CD4-positive, alpha-beta memory T cell (primary cell): ENCODE measurements at regions of chr7 and their contacts with region 1.

Region 1: DNA sequence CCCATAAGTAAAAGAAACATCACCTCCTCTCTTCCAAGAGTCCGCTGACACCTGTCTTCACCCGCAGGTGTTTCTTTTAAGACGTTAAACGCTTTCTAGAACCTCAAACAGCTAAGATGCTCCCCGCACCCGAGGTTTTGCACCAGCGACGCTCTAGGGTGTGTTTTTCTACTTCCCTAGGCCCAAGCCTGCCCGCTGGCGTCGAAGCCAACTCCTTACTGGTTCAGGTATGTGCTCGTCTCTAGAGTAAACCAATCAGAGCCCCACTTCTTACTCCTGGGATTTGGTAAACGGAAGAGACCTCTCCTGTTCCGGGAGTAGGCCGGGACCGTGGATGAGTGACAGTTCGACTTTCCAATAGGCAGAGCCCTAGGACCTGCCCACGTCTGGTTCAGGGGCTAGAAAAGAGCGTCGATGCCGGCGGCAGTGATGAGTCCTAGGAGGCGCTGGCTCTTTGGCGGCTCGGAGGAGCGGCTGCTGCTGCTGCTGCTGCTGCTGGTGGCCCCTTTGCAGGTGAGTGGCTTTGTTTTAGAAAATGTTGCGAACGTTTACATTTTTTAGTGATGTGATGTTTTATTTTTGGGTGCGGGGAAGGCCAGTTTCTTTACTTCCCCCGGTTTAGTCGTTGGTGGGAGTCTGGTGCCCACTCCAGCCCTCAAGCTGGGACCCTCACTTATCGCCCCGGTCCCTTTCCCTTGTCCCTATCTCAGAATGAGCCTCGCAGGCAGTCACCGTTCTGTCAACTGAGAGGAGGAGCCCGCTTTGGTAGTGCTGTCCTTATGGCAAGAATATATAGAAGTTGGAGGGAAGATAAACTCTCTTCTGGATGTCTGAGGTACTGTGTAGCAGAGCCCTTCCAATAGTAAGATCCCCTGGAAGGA is at the start of gene BPGM:
- DNase-seq: peak; percentile 98 to 100 (median 99)
- H3K4me3 ChIP-seq: peak within 1 kb of the TSS; percentile 66 to 68
- H3K4me3 Mint-ChIP-seq: no peak within 1 kb of the TSS
- H3K27ac ChIP-seq: peak within 1 kb of the TSS; percentile 84
- H3K27ac Mint-ChIP-seq: no peak within 1 kb of the TSS
- H3K4me1 ChIP-seq: peaks cover 32% of the 10 kb centered on the region
- H3K4me1 Mint-ChIP-seq: peaks cover 17 to 22% (median 20%) of the 10 kb centered on the region in 4 donors
- H3K27me3 ChIP-seq: no peaks in the 10 kb centered on the region
- H3K27me3 Mint-ChIP-seq: no peaks in the 10 kb centered on the region
- total RNA-seq, gene BPGM: 13.7 to 14.7 TPM

Region 2: DNA sequence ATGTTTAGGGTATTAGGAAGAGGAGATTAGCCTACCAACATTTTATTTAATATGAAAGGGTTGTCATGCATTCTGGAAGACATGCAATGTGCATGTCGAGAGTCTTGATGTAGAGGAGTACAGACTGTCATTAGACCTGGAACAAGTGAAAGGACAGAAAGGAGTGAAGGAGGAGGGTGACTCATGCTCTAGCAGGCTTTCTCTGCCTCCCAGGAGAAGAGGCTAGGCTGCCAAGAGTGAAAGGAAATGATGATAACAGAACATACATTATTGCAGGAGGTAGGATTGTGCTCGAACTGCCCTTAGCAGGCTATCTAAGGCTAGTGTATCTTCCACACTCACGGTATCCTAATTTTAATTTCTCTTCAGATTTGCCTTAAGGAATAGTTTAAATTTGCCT is 1165.0 kb before region 1 on chr7:
- CTCF ChIA-PET with region 1: no interaction called
- POLR2A ChIA-PET with region 1: no interaction called
- intact Hi-C with region 1: no loop called
- DNase-seq: no peak
- H3K4me3 ChIP-seq: no peak overlapping the region
- H3K4me3 Mint-ChIP-seq: no peak overlapping the region
- H3K27ac ChIP-seq: no peak overlapping the region
- H3K27ac Mint-ChIP-seq: no peak overlapping the region
- H3K4me1 ChIP-seq: peaks cover 15% of the 10 kb centered on the region
- H3K4me1 Mint-ChIP-seq: peaks cover 24 to 29% (median 26%) of the 10 kb centered on the region in 4 donors
- H3K27me3 ChIP-seq: no peaks in the 10 kb centered on the region
- H3K27me3 Mint-ChIP-seq: no peaks in the 10 kb centered on the region

Region 3: DNA sequence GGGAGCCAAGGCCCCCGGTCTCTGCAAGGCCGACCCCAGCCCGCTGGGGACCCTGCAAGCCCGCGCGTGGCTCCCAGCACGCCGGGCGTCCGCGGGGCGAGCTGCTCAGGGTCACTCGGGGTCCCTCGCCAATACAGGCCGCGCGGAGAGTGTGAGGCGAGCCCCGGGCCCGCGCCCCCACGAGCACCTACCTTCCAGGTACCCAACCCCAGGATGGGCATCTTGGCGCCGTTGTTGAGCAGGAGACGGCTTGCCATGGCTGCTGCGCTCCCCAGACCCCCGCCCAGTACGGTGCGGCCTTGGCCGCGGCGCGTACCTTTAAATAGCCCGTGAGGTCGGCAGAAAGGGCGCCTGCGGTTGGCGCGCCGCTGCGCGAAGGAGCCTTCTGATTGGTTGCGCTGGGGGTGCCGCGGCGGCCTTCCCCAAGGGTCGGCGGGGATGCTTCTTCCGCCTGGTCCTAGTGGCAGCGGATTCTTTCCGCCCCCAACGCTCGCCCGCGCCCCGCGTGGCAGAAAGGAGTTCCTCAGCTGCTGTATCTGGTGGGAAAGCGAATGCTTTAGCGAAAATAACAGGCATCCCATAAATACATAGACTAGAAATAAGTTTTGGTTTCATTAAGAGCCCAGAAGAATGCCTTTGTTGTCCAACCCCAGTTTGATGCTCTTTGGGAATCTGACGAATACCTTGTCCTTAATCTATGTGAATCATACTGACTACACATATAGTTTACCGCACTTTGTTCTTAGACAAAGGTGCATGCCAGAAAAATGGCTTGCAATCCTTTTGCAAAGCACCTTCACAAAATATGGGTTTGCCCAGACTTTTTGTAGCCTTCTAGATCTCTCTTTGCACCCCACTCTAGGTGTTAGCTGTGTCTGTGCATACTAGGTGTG is 187.6 kb before region 1 on chr7 and contains the start of gene AKR1B1:
- CTCF ChIA-PET with region 1: no interaction called
- POLR2A ChIA-PET with region 1: no interaction called
- intact Hi-C with region 1: loop called (anchors 2 kb)
- DNase-seq: peak; percentile 84 to 89 (median 86)
- H3K4me3 ChIP-seq: peak within 1 kb of the TSS; percentile 25 to 62
- H3K4me3 Mint-ChIP-seq: peak within 1 kb of the TSS; percentile 91 to 94 (median 92)
- H3K27ac ChIP-seq: peak within 1 kb of the TSS; percentile 55
- H3K27ac Mint-ChIP-seq: peak within 1 kb of the TSS; percentile 71 to 95 (median 88)
- H3K4me1 ChIP-seq: peaks cover 36% of the 10 kb centered on the region
- H3K4me1 Mint-ChIP-seq: peaks cover 38 to 57% (median 43%) of the 10 kb centered on the region in 4 donors
- H3K27me3 ChIP-seq: no peaks in the 10 kb centered on the region
- H3K27me3 Mint-ChIP-seq: no peaks in the 10 kb centered on the region
- total RNA-seq, gene AKR1B1: 81.2 to 91.1 TPM

Region 4: GRCh38 chr7:134669845-134670373 is 23.2 kb after region 1 on chr7:
- CTCF ChIA-PET with region 1: interaction called, 25 read pairs
- POLR2A ChIA-PET with region 1: interaction called, 119 read pairs
- intact Hi-C with region 1: loop called (anchors 1 kb)
- DNase-seq: peak; percentile 84 to 94 (median 85)
- H3K4me3 ChIP-seq: peak overlapping the region in 1 of 2 donors; percentile 4
- H3K4me3 Mint-ChIP-seq: peak overlapping the region; percentile 74 to 87 (median 78)
- H3K27ac ChIP-seq: peak overlapping the region; percentile 48
- H3K27ac Mint-ChIP-seq: peak overlapping the region; percentile 91 to 100 (median 98)
- H3K4me1 ChIP-seq: peaks cover 33% of the 10 kb centered on the region
- H3K4me1 Mint-ChIP-seq: peaks cover 26 to 46% (median 37%) of the 10 kb centered on the region in 4 donors
- H3K27me3 ChIP-seq: no peaks in the 10 kb centered on the region
- H3K27me3 Mint-ChIP-seq: no peaks in the 10 kb centered on the region

Region 5: GRCh38 chr7:134750083-134751062 is 103.7 kb after region 1 on chr7:
- CTCF ChIA-PET with region 1: interaction called, 10 read pairs
- POLR2A ChIA-PET with region 1: interaction called, 4 read pairs
- intact Hi-C with region 1: loop called (anchors 5 kb)
- DNase-seq: peak; percentile 40 to 64 (median 52)
- H3K4me3 ChIP-seq: no peak overlapping the region
- H3K4me3 Mint-ChIP-seq: no peak overlapping the region
- H3K27ac ChIP-seq: no peak overlapping the region
- H3K27ac Mint-ChIP-seq: no peak overlapping the region
- H3K4me1 ChIP-seq: no peaks in the 10 kb centered on the region
- H3K4me1 Mint-ChIP-seq: no peaks in the 10 kb centered on the region
- H3K27me3 ChIP-seq: no peaks in the 10 kb centered on the region
- H3K27me3 Mint-ChIP-seq: peaks cover 0 to 2% of the 10 kb centered on the region in 2 donors

Region 6: GRCh38 chr7:135147899-135148721 is 501.4 kb after region 1 on chr7 and contains the start of gene TMEM140:
- CTCF ChIA-PET with region 1: interaction called, 4 read pairs
- POLR2A ChIA-PET with region 1: interaction called, 30 read pairs
- intact Hi-C with region 1: loop called (anchors 5 kb)
- DNase-seq: peak; percentile 74 to 85 (median 80)
- H3K4me3 ChIP-seq: peak within 1 kb of the TSS; percentile 48 to 67
- H3K4me3 Mint-ChIP-seq: peak within 1 kb of the TSS; percentile 85 to 96 (median 92)
- H3K27ac ChIP-seq: peak within 1 kb of the TSS; percentile 90
- H3K27ac Mint-ChIP-seq: peak within 1 kb of the TSS; percentile 90 to 99 (median 98)
- H3K4me1 ChIP-seq: peaks cover 61% of the 10 kb centered on the region
- H3K4me1 Mint-ChIP-seq: peaks cover 44 to 78% (median 59%) of the 10 kb centered on the region in 4 donors
- H3K27me3 ChIP-seq: no peaks in the 10 kb centered on the region
- H3K27me3 Mint-ChIP-seq: no peaks in the 10 kb centered on the region
- total RNA-seq, gene TMEM140: 28.3 to 31.3 TPM

Region 7: DNA sequence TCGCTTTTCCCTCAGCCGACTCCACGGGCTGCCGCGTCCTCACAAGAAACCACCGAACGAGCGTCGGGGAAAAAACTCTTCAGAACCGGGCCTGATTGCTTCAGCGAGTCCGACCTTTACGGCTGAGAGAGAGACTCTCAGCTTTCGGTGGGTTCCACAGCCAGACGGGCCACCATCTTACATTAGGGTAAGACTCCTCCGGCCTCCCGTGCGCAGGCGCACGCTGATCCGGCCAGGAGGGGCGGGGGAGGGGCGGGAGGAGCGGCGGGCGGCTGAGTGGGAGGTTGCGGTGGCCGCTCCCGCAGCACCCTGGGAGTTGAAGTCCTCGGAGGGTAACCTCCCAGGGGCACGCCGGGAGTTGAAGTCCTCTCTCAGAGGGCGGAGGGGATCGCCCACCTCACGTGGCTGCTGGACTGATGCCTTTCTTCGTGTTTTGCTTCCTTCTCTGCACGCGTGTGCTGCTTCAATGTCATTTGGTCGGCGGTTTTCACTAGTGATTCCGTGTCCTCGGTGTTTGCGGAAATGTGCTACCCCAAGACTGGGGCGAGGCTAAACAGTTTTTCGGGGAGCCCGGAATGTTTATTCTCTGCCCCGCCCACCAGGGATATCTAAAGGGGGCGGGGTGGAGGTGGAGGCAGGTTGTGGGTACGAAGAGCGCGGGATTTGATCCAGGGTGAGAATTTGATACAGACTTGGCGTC is 863.4 kb after region 1 on chr7 and contains the start of gene CNOT4:
- CTCF ChIA-PET with region 1: no interaction called
- POLR2A ChIA-PET with region 1: no interaction called
- intact Hi-C with region 1: loop called (anchors 1 kb)
- DNase-seq: peak; percentile 91 to 98 (median 95)
- H3K4me3 ChIP-seq: peak within 1 kb of the TSS; percentile 73 to 85
- H3K4me3 Mint-ChIP-seq: no peak within 1 kb of the TSS
- H3K27ac ChIP-seq: peak within 1 kb of the TSS; percentile 95
- H3K27ac Mint-ChIP-seq: no peak within 1 kb of the TSS
- H3K4me1 ChIP-seq: peaks cover 34% of the 10 kb centered on the region
- H3K4me1 Mint-ChIP-seq: peaks cover 2 to 12% (median 6%) of the 10 kb centered on the region in 4 donors
- H3K27me3 ChIP-seq: no peaks in the 10 kb centered on the region
- H3K27me3 Mint-ChIP-seq: no peaks in the 10 kb centered on the region
- total RNA-seq, gene CNOT4: 33.9 to 35.0 TPM